ENCODE measurements at regions of chr2 and their contacts with region 1.

Region 1: GRCh38 chr2:196076778-196077568 is 8.3 kb upstream of the DNAH7 start:
- DNase-seq: no peak
- ATAC-seq: no peak
- H3K4me3 ChIP-seq: no peak overlapping the region
- H3K27ac ChIP-seq: no peak overlapping the region
- H3K4me1 ChIP-seq: no peaks in the 10 kb centered on the region
- H3K27me3 ChIP-seq: no peaks in the 10 kb centered on the region
- CTCF ChIP-seq: no peak

Region 2: DNA sequence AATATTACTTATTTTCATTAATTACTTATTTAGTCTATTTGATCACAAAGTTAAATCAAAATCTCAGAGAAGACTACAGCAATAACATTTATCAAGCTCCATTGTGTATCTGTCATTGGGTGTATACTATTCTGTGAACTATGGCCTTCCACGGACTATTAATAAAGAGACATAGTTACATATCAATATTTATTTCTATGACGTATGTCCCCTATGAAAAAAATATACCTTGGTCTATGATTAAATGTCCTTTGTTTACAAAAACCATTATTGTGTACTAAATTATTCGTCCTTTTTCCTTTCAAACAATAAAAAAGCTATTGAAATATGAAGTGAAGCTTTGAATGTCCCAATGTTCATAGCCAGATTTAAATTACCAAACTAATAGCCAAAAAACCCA is 1315.9 kb before region 1 on chr2:
- intact Hi-C with region 1: no loop called
- DNase-seq: no peak
- ATAC-seq: no peak
- H3K4me3 ChIP-seq: no peak overlapping the region
- H3K27ac ChIP-seq: no peak overlapping the region
- H3K4me1 ChIP-seq: no peaks in the 10 kb centered on the region
- H3K27me3 ChIP-seq: no peaks in the 10 kb centered on the region
- CTCF ChIP-seq: no peak

Region 3: GRCh38 chr2:196171248-196171871 is 94.4 kb after region 1 on chr2 and contains the start of gene STK17B:
- intact Hi-C with region 1: loop called in 1 of 2 experiments (anchors 5 kb)
- DNase-seq: peak; percentile 95 to 97
- ATAC-seq: peak; percentile 97 to 99 (median 98)
- H3K4me3 ChIP-seq: peak within 1 kb of the TSS; percentile 93
- H3K27ac ChIP-seq: peak within 1 kb of the TSS; percentile 84
- H3K4me1 ChIP-seq: peaks cover 7% of the 10 kb centered on the region
- H3K27me3 ChIP-seq: no peaks in the 10 kb centered on the region
- CTCF ChIP-seq: no peak
- total RNA-seq, gene STK17B: 2.9 to 5.3 (median 4.5) TPM

Region 4: GRCh38 chr2:196291873-196292800 is 215.2 kb after region 1 on chr2:
- intact Hi-C with region 1: loop called in 1 of 2 experiments (anchors 10 kb)
- DNase-seq: peak in 1 of 2 donors; percentile 27
- ATAC-seq: peak; percentile 33 to 93 (median 88)
- H3K4me3 ChIP-seq: no peak overlapping the region
- H3K27ac ChIP-seq: no peak overlapping the region
- H3K4me1 ChIP-seq: no peaks in the 10 kb centered on the region
- H3K27me3 ChIP-seq: no peaks in the 10 kb centered on the region
- CTCF ChIP-seq: no peak

Region 5: DNA sequence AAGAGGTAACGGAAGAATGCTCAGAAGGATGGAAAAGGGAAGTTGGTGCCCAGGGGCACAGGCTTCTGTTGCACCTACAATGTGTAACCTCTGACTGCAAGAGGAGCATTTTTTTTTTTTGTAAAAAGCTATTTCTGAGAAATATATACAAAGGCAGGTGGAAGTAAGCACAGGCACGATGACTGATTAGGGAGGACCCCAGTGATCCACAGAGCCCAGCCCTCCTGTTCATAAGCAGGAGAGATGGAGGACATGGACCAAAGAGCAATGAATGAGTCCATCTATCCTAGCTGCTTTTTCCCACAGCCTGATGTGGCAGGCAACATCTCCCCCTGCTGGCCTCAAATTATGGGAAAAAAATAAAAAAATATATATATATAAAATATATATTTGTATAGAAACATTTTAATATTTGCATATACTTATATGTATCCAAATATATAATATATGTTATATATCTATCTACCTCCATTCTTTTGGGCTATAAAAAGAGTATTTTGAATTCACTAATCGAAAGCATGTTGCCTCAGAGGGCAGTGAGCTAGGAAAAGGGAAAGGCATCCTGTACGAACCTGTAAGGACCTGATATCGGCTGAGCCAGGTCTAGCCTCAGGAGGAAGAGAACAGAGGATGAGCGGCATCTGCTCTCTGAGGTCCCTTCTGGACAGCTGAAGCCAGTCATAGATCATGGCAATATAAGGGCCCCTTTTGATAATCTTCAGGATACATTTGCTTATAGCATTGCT is 260.4 kb after region 1 on chr2:
- intact Hi-C with region 1: loop called in 1 of 2 experiments (anchors 5 kb)
- DNase-seq: no peak
- ATAC-seq: no peak
- H3K4me3 ChIP-seq: no peak overlapping the region
- H3K27ac ChIP-seq: no peak overlapping the region
- H3K4me1 ChIP-seq: no peaks in the 10 kb centered on the region
- H3K27me3 ChIP-seq: no peaks in the 10 kb centered on the region
- CTCF ChIP-seq: peak; percentile 50

Region 6: DNA sequence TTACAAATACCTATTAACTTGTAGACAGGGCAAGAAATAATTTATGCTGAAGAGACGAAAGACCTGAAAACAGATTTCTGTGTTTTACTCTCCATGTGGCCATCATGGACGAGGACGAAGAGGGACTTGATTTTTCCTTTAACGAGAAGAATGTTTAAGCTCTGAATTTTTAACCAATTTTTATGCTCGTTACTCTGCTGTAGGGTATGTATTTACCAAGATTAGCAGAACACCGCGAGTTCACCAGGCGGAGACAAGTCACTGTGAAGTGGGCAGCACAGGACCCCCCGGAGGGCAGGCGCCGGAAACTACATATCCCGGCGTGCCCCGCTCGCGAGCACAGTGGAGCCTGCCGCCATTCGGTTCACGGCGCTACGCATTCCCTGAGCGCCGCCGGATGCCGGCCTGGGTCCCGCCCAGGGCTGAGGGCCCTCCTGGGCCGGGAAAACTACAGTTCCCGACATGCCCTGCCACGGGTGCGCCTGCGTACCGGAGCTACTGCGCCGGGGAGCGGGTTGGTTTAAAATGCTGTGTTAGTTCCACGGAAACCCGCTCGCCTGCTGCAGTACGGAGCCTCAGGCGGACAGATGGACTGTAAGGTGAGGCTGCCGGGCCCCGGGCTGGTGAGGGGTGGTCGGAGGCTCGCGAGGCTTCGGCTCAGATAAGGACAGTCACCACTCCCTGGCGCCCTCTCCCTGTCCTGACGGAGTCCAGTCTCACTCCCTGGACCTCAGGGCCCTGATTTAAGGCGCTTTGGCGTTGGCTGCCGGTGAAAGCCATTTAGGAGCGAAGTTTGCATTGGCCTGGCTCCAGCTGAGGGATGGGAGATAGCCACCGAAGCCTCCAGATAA is 562.4 kb after region 1 on chr2 and contains the start of gene CCDC150:
- intact Hi-C with region 1: loop called in 1 of 2 experiments (anchors 10 kb)
- DNase-seq: peak; percentile 93 to 96
- ATAC-seq: peak; percentile 100
- H3K4me3 ChIP-seq: peak within 1 kb of the TSS; percentile 78
- H3K27ac ChIP-seq: peak within 1 kb of the TSS; percentile 34
- H3K4me1 ChIP-seq: no peaks in the 10 kb centered on the region
- H3K27me3 ChIP-seq: no peaks in the 10 kb centered on the region
- CTCF ChIP-seq: peak; percentile 12
- total RNA-seq, gene CCDC150: 0.36 to 1.4 (median 0.56) TPM in 3 of 4 donors, not detected in the other

Measured in psoas muscle (tissue), 8 donors.